ENCODE measurements at regions of chr1 and their contacts with region 1.

Region 1: GRCh38 chr1:25743826-25744581 is 56.0 kb upstream of the SELENON start:
- DNase-seq: peak; percentile 68 to 78
- ATAC-seq: peak; percentile 71 to 91 (median 88)
- H3K4me3 ChIP-seq: peak overlapping the region in 2 of 10 donors; percentile 4 to 11
- H3K27ac ChIP-seq: peak overlapping the region; percentile 69 to 95 (median 90)
- H3K4me1 ChIP-seq: peaks cover 12 to 47% (median 33%) of the 10 kb centered on the region in 9 donors
- H3K27me3 ChIP-seq: no peaks in the 10 kb centered on the region
- CTCF ChIP-seq: peak; percentile 9 to 74 (median 49)

Region 2: GRCh38 chr1:25608488-25609178 is 135.4 kb before region 1 on chr1:
- intact Hi-C with region 1: loop called in 3 of 10 experiments (anchors 2 to 10 kb)
- DNase-seq: peak; percentile 86 to 90
- ATAC-seq: peak; percentile 67 to 95 (median 92)
- H3K4me3 ChIP-seq: peak overlapping the region in 6 of 10 donors; percentile 19 to 44 (median 30)
- H3K27ac ChIP-seq: no peak overlapping the region
- H3K4me1 ChIP-seq: peaks cover 0 to 9% (median 6%) of the 10 kb centered on the region in 9 donors
- H3K27me3 ChIP-seq: peaks cover 0 to 14% (median 0%) of the 10 kb centered on the region in 7 donors
- CTCF ChIP-seq: peak; percentile 51 to 89 (median 79)

Region 3: GRCh38 chr1:25616095-25616986 is 127.7 kb before region 1 on chr1 and contains the start of gene MAN1C1:
- intact Hi-C with region 1: loop called in 7 of 10 experiments (anchors 2 to 10 kb)
- DNase-seq: peak; percentile 90 to 92
- ATAC-seq: peak; percentile 90 to 94 (median 93)
- H3K4me3 ChIP-seq: peak within 1 kb of the TSS; percentile 78 to 100 (median 90)
- H3K27ac ChIP-seq: peak within 1 kb of the TSS; percentile 78 to 92 (median 88)
- H3K4me1 ChIP-seq: peaks cover 11 to 55% (median 43%) of the 10 kb centered on the region in 9 donors
- H3K27me3 ChIP-seq: peaks cover 0 to 10% (median 0%) of the 10 kb centered on the region in 7 donors
- CTCF ChIP-seq: peak; percentile 18 to 71 (median 45)
- total RNA-seq, gene MAN1C1: 9.7 to 23.4 (median 14.2) TPM

Region 4: DNA sequence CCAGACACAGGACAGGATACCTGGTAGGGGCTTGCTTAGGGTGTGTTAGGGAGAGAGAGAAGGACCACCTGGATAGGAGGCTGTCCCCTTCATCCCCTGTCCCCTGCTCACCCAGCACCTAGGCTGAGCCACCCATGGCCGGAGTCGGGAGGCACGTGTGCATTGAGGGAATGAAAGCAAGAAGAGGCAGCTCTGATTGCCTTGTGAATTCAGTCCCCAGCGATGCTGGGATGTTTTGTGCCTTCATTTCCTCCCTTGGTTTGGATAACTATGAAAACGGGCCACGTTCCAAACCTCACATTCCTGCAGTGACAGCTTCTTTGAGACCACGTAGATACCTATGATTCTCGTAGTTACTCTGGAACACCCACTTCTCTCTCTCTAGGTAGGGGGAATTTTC is 60.3 kb before region 1 on chr1:
- intact Hi-C with region 1: no loop called
- DNase-seq: no peak
- ATAC-seq: peak in 3 of 8 donors; percentile 9 to 36 (median 34)
- H3K4me3 ChIP-seq: no peak overlapping the region
- H3K27ac ChIP-seq: no peak overlapping the region
- H3K4me1 ChIP-seq: peaks cover 8 to 40% (median 25%) of the 10 kb centered on the region in 9 donors
- H3K27me3 ChIP-seq: no peaks in the 10 kb centered on the region
- CTCF ChIP-seq: no peak

Region 5: DNA sequence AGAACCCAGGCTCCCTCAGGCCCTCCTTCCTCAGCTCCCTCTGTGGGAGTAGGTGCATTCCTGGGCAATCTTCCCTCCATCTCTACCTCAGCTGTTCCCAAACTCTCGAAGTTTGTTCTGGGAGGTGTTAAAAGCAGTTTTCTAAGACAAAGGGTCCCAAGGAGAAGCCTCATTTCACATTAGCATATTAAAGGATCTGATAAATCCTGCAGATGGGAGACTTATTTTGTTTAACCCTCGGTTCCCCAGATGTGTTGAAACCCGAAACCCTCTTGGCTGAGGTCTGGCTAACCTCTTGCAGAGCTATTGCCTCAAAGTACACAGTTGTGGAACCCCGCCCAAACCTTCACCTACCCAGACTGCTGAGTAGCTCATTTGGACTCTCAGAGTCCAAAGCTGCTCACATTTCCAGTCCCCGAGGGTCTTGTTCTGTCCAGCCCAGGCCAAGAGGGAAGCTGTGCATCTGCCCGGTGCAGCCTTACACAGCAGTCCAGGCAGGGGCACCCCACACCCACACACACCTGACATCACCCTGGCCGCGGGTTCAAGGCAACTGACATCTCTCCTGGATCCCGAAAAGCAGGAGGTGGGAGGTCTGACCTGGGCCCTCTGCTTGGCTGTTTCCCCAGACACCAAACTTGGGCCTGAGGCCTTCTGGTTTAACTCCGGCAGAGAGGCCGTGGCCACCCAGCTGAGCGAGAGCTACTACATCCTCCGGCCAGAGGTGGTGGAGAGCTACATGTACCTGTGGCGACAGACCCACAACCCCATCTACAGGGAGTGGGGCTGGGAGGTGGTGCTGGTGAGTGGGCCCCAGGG is 36.5 kb after region 1 on chr1:
- intact Hi-C with region 1: loop called in 1 of 10 experiments (anchors 5 kb)
- DNase-seq: no peak
- ATAC-seq: no peak
- H3K4me3 ChIP-seq: no peak overlapping the region
- H3K27ac ChIP-seq: no peak overlapping the region
- H3K4me1 ChIP-seq: peaks cover 2 to 32% (median 10%) of the 10 kb centered on the region in 9 donors
- H3K27me3 ChIP-seq: no peaks in the 10 kb centered on the region
- CTCF ChIP-seq: no peak

Region 6: DNA sequence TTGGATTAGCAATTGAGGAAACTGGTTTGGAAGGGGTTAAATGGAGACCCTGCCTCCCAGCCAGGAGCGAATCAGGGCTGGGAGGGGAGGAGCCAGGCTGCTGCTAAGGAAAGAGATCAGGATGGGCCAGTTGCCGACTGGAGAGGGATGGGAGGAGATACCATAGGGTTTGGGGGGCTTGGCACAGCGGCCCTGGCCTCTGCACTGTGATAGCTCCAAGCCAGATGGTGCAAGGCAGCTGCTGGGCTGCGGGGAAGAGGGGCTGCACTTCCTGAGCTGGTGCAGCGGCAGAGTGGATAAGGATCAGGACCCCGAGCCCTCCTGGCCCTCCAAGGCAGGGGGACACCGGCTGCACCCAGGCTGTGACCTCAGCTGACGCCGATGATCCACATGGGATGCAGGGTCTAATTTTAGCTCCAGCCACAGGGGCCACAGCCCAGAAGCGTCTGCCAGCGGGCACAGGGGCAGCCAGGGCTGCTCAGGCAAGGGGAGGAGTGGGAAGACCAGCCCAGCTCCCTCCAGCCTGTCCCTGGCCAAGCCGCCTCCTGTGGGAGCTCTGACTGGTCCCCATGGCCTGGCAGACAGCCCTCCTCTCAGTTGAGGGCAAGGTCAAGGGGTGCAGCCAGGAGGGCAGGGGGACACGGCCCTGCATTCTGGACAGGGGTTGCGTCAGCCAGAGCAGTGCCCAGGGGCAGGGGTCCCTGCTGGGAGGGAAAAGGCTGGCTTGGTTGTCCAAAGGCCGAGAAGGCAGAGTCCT is 277.8 kb after region 1 on chr1 and contains the start of gene EXTL1:
- intact Hi-C with region 1: no loop called
- DNase-seq: peak; percentile 77 to 79
- ATAC-seq: peak; percentile 79 to 89 (median 82)
- H3K4me3 ChIP-seq: peak within 1 kb of the TSS in 7 of 10 donors; percentile 26 to 49 (median 45)
- H3K27ac ChIP-seq: peak within 1 kb of the TSS; percentile 58 to 97 (median 84)
- H3K4me1 ChIP-seq: peaks cover 9 to 71% (median 44%) of the 10 kb centered on the region in 9 donors
- H3K27me3 ChIP-seq: no peaks in the 10 kb centered on the region
- CTCF ChIP-seq: no peak
- total RNA-seq, gene EXTL1: 1.1 to 17.0 (median 9.1) TPM

Measured in heart right ventricle (tissue), 16 donors.